ENCODE measurements at regions of chr14 and their contacts with region 1.

Region 1: GRCh38 chr14:24271134-24271833 is at the start of gene RABGGTA:
- DNase-seq: peak; percentile 96
- ATAC-seq: peak; percentile 95
- H3K4me3 ChIP-seq: peak within 1 kb of the TSS; percentile 78 to 96 (median 78)
- H3K27ac ChIP-seq: peak within 1 kb of the TSS; percentile 92
- H3K4me1 ChIP-seq: peaks cover 22% of the 10 kb centered on the region
- H3K27me3 ChIP-seq: no peaks in the 10 kb centered on the region; a peak in 1 of 5 replicates
- CTCF ChIP-seq: peak; percentile 99
- EP300 ChIP-seq: peak; percentile 76 to 86; a peak in 3 of 4 replicates
- POLR2A ChIP-seq: peak in 1 of 2 experiments; percentile 96; a peak in 2 of 4 replicates
- RAD21 ChIP-seq: peak; percentile 91
- total RNA-seq, gene RABGGTA: 31.2 and 57.9 TPM in 2 replicates

Region 2: DNA sequence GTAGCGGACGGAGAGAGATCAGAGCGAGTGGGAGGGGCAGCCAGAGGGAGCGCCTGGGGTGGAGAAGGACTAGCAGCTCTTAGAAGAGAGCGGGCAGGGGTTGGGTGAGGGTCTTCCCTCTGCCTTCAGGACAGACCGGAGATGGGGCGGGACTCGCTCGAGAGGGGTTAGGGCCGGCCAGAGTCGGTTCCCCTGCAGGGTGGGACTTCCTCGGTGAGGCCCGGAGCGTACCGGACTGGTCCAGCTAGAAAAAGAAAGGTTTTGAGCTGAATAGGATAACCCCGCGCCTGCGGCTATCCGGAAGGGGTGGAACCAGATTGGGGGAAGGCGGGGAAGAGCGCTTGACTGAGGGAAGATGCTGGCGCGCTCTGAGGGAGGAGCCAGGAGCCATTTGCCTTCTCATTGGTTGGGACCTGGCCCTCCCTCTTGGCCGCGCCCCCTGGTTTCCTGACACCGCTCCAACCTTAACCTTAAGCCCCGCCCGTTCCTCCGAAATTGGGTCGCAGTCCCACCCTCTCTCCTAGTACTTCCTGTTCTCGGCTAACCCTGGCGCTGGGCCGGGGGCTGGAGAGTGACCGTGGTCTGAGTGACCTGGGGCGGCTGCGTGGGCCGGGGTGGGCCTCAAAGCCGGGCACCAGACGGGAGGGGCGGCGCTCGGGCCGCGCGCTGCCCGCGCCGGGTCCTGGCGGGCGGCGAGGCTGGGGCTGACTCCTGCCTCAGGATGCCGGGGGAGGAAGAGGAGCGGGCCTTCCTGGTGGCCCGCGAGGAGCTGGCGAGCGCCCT is 124.1 kb before region 1 on chr14 and contains the start of gene RNF31:
- CTCF ChIA-PET with region 1: no interaction called
- POLR2A ChIA-PET with region 1: interaction called, 21 read pairs
- in situ Hi-C with region 1: no loop called
- intact Hi-C with region 1: no loop called
- DNase-seq: peak; percentile 100
- ATAC-seq: peak; percentile 90
- H3K4me3 ChIP-seq: peak within 1 kb of the TSS; percentile 91 to 100 (median 96)
- H3K27ac ChIP-seq: peak within 1 kb of the TSS; percentile 76
- H3K4me1 ChIP-seq: peaks cover 59% of the 10 kb centered on the region
- H3K27me3 ChIP-seq: peaks cover 0 to 3% of the 10 kb centered on the region in 2 experiments; a peak in 1 of 5 replicates
- CTCF ChIP-seq: no peak; the same call in 1 of the 2 replicates
- EP300 ChIP-seq: no peak
- POLR2A ChIP-seq: peak in 1 of 2 experiments; percentile 67; a peak in 2 of 4 replicates
- RAD21 ChIP-seq: peak; percentile 39
- total RNA-seq, gene RNF31: 65.9 and 86.8 TPM in 2 replicates

Region 3: GRCh38 chr14:24195191-24196070 is 75.9 kb before region 1 on chr14 and contains the start of gene TM9SF1:
- CTCF ChIA-PET with region 1: interaction called, 3 read pairs
- POLR2A ChIA-PET with region 1: interaction called, 33 read pairs
- in situ Hi-C with region 1: no loop called
- intact Hi-C with region 1: no loop called
- DNase-seq: peak; percentile 93
- ATAC-seq: peak; percentile 94
- H3K4me3 ChIP-seq: peak within 1 kb of the TSS; percentile 79 to 91 (median 85)
- H3K27ac ChIP-seq: peak within 1 kb of the TSS; percentile 84
- H3K4me1 ChIP-seq: peaks cover 65% of the 10 kb centered on the region
- H3K27me3 ChIP-seq: no peaks in the 10 kb centered on the region; a peak in 1 of 5 replicates
- CTCF ChIP-seq: peak; percentile 54
- EP300 ChIP-seq: peak; percentile 7 to 39; a peak in 1 of 4 replicates
- POLR2A ChIP-seq: peak in 1 of 2 experiments; percentile 81; a peak in 2 of 4 replicates
- RAD21 ChIP-seq: peak; percentile 52
- total RNA-seq, gene TM9SF1: 56.4 and 110 TPM in 2 replicates

Region 4: DNA sequence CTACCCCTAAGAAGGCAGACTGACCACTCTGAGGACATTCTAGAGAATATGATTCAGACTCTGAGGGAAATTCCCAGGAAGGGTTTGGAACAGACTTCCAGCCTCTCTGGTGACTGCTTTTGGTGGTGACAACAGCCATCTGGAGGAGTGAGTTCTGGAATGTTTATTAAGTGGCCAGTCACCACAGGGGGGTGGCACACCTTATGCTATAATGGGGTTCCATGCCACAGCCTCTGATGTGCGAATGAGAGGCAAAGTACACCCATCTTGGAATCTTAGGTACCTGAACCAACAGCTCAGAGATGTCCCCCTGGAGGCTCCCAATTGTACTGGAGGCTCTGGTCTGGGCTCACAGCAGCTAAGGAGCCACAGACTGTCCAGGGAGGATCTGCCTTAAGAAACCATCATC is 19.4 kb before region 1 on chr14:
- CTCF ChIA-PET with region 1: no interaction called
- POLR2A ChIA-PET with region 1: interaction called, 254 read pairs
- in situ Hi-C with region 1: no loop called
- intact Hi-C with region 1: loop called (anchors 1 kb)
- DNase-seq: no peak
- ATAC-seq: peak; percentile 32
- H3K4me3 ChIP-seq: no peak overlapping the region
- H3K27ac ChIP-seq: peak overlapping the region; percentile 59
- H3K4me1 ChIP-seq: peaks cover 35% of the 10 kb centered on the region
- H3K27me3 ChIP-seq: no peaks in the 10 kb centered on the region
- CTCF ChIP-seq: no peak
- EP300 ChIP-seq: no peak
- POLR2A ChIP-seq: 0 out of 4 replicates have a peak, but pooled peaks of 1 of the 2 experiments have one; percentile 2
- RAD21 ChIP-seq: no peak

Region 5: GRCh38 chr14:24289649-24290249 is 18.5 kb after region 1 on chr14:
- CTCF ChIA-PET with region 1: no interaction called
- POLR2A ChIA-PET with region 1: interaction called, 42 read pairs
- in situ Hi-C with region 1: no loop called
- intact Hi-C with region 1: no loop called
- DNase-seq: no peak
- ATAC-seq: no peak
- H3K4me3 ChIP-seq: no peak overlapping the region
- H3K27ac ChIP-seq: no peak overlapping the region
- H3K4me1 ChIP-seq: peaks cover 10% of the 10 kb centered on the region
- H3K27me3 ChIP-seq: no peaks in the 10 kb centered on the region
- CTCF ChIP-seq: no peak
- EP300 ChIP-seq: no peak
- POLR2A ChIP-seq: no peak
- RAD21 ChIP-seq: no peak

Region 6: GRCh38 chr14:24315807-24316603 is 44.7 kb after region 1 on chr14:
- CTCF ChIA-PET with region 1: no interaction called
- POLR2A ChIA-PET with region 1: interaction called, 25 read pairs
- in situ Hi-C with region 1: no loop called
- intact Hi-C with region 1: no loop called
- DNase-seq: peak; percentile 65
- ATAC-seq: peak; percentile 81
- H3K4me3 ChIP-seq: peak overlapping the region; percentile 29 to 73 (median 40)
- H3K27ac ChIP-seq: peak overlapping the region; percentile 18
- H3K4me1 ChIP-seq: peaks cover 37% of the 10 kb centered on the region
- H3K27me3 ChIP-seq: peaks cover 6 to 39% of the 10 kb centered on the region in 2 experiments; a peak in 4 of 5 replicates
- CTCF ChIP-seq: peak; percentile 88
- EP300 ChIP-seq: 0 out of 4 replicates have a peak, but pooled peaks of 1 of the 2 experiments have one; percentile 9
- POLR2A ChIP-seq: no peak; a peak in 2 of 4 replicates
- RAD21 ChIP-seq: peak; percentile 72